Ovary (tissue), 10 donors: ENCODE measurements at regions of chr4 and their contacts with region 1.

Region 1: GRCh38 chr4:11418610-11419009 is 10.1 kb downstream of the HS3ST1 start:
- DNase-seq: no peak
- H3K4me3 ChIP-seq: no peak overlapping the region
- H3K27ac ChIP-seq: peak overlapping the region in 1 of 2 donors; percentile 11
- H3K4me1 ChIP-seq: peaks cover 36% of the 10 kb centered on the region
- H3K27me3 ChIP-seq: no peaks in the 10 kb centered on the region
- CTCF ChIP-seq: no peak
- EP300 ChIP-seq: no peak
- POLR2A ChIP-seq: no peak

Region 2: DNA sequence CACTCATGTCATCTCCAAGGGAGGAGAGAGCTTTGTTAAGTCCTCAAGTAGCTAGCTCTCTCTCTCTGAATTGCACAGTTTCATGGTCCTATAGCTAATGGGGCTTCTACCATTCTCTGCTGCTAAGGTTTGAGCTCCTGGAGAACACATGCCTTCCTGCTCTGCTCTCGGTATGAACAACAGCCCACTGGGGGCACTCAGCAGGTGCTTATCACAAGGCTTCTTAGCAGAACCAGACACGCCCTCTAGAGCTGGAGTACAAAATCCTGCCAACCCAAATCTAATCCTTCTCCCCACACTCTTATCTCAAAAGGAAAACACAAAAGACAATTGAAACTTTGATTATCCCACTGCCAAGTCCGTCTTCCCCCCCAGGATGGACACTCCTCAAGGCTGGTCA is 166.5 kb before region 1 on chr4:
- intact Hi-C with region 1: no loop called
- DNase-seq: no peak
- H3K4me3 ChIP-seq: no peak overlapping the region
- H3K27ac ChIP-seq: no peak overlapping the region
- H3K4me1 ChIP-seq: no peaks in the 10 kb centered on the region
- H3K27me3 ChIP-seq: no peaks in the 10 kb centered on the region
- CTCF ChIP-seq: no peak
- EP300 ChIP-seq: no peak
- POLR2A ChIP-seq: no peak

Region 3: GRCh38 chr4:11297201-11297600 is 121.4 kb before region 1 on chr4:
- intact Hi-C with region 1: loop called in 1 of 4 experiments (anchors 10 kb)
- DNase-seq: no peak
- H3K4me3 ChIP-seq: no peak overlapping the region
- H3K27ac ChIP-seq: no peak overlapping the region
- H3K4me1 ChIP-seq: peaks cover 7% of the 10 kb centered on the region
- H3K27me3 ChIP-seq: no peaks in the 10 kb centered on the region
- CTCF ChIP-seq: no peak
- EP300 ChIP-seq: no peak
- POLR2A ChIP-seq: no peak

Region 4: DNA sequence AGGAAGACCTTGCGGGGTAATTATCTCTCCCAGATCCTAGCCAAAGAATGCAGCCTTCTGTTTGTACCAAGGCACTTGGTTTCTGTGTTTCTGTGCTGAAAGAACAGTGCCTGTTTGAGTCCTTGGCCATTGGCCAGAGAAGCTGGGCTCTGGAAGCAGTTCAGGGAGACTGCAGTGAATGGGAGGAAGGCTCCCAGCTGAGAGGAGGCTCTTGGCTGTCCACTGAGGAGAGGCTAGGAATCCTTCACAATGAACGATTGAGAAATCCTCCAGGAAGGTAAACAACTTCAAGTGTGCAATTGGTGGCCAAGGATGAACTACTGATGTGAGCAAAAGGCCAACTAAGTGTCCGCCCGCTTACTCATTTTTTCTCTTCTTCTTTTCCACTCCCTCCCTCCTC is 51.2 kb before region 1 on chr4:
- intact Hi-C with region 1: loop called in 1 of 4 experiments (anchors 10 kb)
- DNase-seq: peak; percentile 91 to 93 (median 93)
- H3K4me3 ChIP-seq: no peak overlapping the region
- H3K27ac ChIP-seq: no peak overlapping the region
- H3K4me1 ChIP-seq: peaks cover 9% of the 10 kb centered on the region
- H3K27me3 ChIP-seq: no peaks in the 10 kb centered on the region
- CTCF ChIP-seq: no peak
- EP300 ChIP-seq: no peak
- POLR2A ChIP-seq: no peak

Region 5: DNA sequence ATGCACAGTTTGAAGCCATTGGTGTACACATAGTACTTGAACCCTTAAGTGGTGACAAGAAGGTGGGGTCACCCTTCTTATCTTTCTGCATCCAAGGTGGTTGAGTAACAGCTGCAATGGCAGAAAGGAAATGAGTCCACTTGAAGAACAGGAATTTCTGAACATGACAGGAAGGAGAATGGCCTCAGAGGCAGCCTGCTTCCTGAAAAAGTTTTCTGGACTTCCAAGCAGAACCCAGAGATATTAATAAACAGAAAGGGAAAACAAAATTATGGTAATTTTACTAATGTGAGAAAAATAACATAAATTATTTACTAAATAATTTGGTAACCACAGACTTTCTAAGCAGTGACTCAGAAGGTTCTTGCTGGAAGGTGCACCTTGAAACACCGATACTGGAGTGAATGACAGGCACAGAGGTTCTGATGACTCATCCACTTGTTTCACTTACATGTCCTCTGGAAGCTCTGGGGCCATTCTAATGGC is 130.0 kb after region 1 on chr4:
- intact Hi-C with region 1: no loop called
- DNase-seq: no peak
- H3K4me3 ChIP-seq: no peak overlapping the region
- H3K27ac ChIP-seq: no peak overlapping the region
- H3K4me1 ChIP-seq: no peaks in the 10 kb centered on the region
- H3K27me3 ChIP-seq: peaks cover 3% of the 10 kb centered on the region
- CTCF ChIP-seq: no peak
- EP300 ChIP-seq: no peak
- POLR2A ChIP-seq: no peak